ENCODE measurements at regions of chr12 and their contacts with region 1.

Region 1: GRCh38 chr12:95623585-95624042 is 72.3 kb upstream of the USP44 start:
- DNase-seq: peak; percentile 88
- H3K4me3 ChIP-seq: no peak overlapping the region
- H3K27ac ChIP-seq: peak overlapping the region; percentile 98
- H3K4me1 ChIP-seq: peaks cover 16% of the 10 kb centered on the region
- H3K27me3 ChIP-seq: no peaks in the 10 kb centered on the region
- CTCF ChIP-seq: peak; percentile 73 to 83
- POLR2A ChIP-seq: no peak

Region 2: GRCh38 chr12:95608252-95609033 is 15.2 kb before region 1 on chr12:
- CTCF ChIA-PET with region 1: interaction called, 8 read pairs
- POLR2A ChIA-PET with region 1: no interaction called
- dilution Hi-C with region 1: no loop called
- intact Hi-C with region 1: loop called (anchors 1 kb)
- DNase-seq: peak; percentile 91
- H3K4me3 ChIP-seq: no peak overlapping the region
- H3K27ac ChIP-seq: peak overlapping the region; percentile 91
- H3K4me1 ChIP-seq: peaks cover 74% of the 10 kb centered on the region
- H3K27me3 ChIP-seq: no peaks in the 10 kb centered on the region
- CTCF ChIP-seq: no peak
- POLR2A ChIP-seq: no peak

Region 3: DNA sequence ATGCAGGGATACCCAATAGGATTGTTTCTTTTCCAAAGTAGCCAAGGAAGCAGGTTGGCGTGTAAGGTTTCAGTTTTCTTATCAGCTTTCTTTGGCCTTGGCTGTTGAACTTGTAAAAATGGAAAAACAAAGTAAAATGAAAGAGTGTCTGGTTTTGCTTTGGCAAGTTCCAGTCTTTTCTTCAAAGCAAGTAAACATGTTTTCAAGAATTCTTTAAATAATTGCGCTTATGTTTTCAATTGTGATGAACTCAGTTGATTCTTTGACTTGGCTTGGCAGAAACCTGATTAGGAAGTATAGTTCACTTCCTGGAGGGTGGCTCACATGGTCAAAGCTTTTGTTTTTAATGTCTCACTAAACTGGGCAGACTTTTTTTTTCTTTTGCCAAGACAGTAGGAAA is 39.9 kb after region 1 on chr12:
- CTCF ChIA-PET with region 1: interaction called, 3 read pairs
- POLR2A ChIA-PET with region 1: no interaction called
- dilution Hi-C with region 1: no loop called
- intact Hi-C with region 1: loop called (anchors 1 kb)
- DNase-seq: peak; percentile 97
- H3K4me3 ChIP-seq: peak overlapping the region in 2 of 3 experiments; percentile 56 to 67
- H3K27ac ChIP-seq: peak overlapping the region; percentile 93
- H3K4me1 ChIP-seq: peaks cover 26% of the 10 kb centered on the region
- H3K27me3 ChIP-seq: no peaks in the 10 kb centered on the region
- CTCF ChIP-seq: no peak
- POLR2A ChIP-seq: peak; percentile 41

Region 4: GRCh38 chr12:95721350-95721749 is 97.7 kb after region 1 on chr12:
- CTCF ChIA-PET with region 1: interaction called, 6 read pairs
- POLR2A ChIA-PET with region 1: no interaction called
- dilution Hi-C with region 1: no loop called
- intact Hi-C with region 1: loop called (anchors 5 kb)
- DNase-seq: no peak
- H3K4me3 ChIP-seq: no peak overlapping the region
- H3K27ac ChIP-seq: no peak overlapping the region
- H3K4me1 ChIP-seq: peaks cover 13% of the 10 kb centered on the region
- H3K27me3 ChIP-seq: no peaks in the 10 kb centered on the region
- CTCF ChIP-seq: peak in 1 of 2 donors; percentile 9
- POLR2A ChIP-seq: no peak

Region 5: DNA sequence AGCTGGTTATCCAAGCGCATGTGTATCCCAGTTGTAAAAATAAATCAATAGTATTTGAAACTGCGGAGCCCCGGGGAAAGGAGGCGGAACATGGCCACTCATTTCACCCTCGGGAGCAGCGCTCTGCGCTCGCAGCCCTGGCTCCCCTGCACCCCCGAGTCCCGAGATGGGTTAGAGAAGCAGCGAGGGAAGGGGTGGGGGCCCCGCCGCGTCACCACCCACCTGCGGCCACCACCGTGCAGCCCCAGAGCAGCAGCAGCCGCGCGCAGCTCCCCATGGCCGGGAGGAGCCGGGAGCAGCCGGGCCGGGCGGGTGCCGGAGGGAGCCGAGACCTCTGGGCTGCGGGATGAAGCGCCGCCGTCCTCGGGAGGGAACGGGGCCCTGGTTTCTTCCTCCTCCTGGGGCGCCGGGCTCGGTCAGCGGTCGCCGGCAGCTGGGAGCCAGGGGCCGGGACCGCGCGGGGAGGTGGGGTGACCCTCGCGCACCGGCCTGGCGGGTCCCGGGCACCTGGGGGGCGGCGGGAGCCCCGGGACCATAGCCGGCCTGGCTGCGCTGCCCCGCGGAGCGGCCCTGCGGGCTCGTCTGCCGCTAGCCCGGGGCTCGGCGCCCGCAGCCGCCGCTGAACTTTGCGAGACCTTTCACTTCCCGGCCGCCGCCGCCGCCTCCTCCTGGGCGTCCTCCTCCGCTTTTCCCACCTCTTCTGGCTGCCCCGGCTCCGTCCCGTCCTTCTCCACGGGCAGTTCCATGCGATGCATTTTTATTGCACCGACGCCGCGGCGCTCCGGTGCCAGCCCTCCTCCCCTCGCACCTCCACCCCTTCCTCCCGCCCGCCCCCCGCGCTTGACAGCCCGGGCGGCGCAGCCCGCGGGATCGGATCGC is 166.7 kb after region 1 on chr12 and contains the start of gene NTN4:
- CTCF ChIA-PET with region 1: interaction called, 3 read pairs
- POLR2A ChIA-PET with region 1: no interaction called
- dilution Hi-C with region 1: no loop called
- intact Hi-C with region 1: loop called (anchors 1 kb)
- DNase-seq: peak; percentile 67
- H3K4me3 ChIP-seq: peak within 1 kb of the TSS; percentile 79 to 93 (median 89)
- H3K27ac ChIP-seq: peak within 1 kb of the TSS; percentile 83
- H3K4me1 ChIP-seq: peaks cover 38% of the 10 kb centered on the region
- H3K27me3 ChIP-seq: no peaks in the 10 kb centered on the region
- CTCF ChIP-seq: no peak
- POLR2A ChIP-seq: peak; percentile 66
- total RNA-seq, gene NTN4: 105 and 120 TPM in 2 replicates

Region 6: DNA sequence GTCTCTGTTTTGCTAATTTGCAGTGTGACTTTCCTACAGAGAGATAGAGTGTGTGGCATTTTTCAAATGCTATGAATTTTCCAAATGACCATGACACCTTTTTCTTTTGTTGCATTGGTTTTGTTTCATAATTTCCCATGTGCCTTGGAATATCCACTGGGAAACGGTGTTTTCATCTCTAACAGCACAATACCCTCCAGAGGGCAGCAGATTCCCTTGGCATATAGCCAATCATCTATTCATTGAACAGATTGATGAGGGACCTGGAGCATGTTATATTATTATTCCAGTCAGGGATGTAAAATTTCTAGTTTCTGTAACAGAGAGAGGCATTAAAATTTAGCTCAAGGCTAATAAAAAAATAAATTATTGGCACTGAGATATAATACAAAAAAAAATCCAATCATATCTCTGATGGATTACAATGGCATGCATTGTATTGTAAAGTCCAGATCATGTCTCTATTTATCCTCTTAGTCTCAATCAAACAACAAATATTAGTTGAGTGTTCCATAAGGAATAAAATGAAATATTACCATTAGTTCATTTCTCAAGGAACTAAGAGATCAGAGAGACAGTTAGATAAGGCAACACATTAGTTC is 196.6 kb after region 1 on chr12:
- CTCF ChIA-PET with region 1: interaction called, 5 read pairs
- POLR2A ChIA-PET with region 1: no interaction called
- dilution Hi-C with region 1: no loop called
- intact Hi-C with region 1: loop called (anchors 1 kb)
- DNase-seq: peak; percentile 75
- H3K4me3 ChIP-seq: no peak overlapping the region
- H3K27ac ChIP-seq: no peak overlapping the region
- H3K4me1 ChIP-seq: no peaks in the 10 kb centered on the region
- H3K27me3 ChIP-seq: no peaks in the 10 kb centered on the region
- CTCF ChIP-seq: peak; percentile 51 to 61
- POLR2A ChIP-seq: no peak

Measured in endothelial cell of umbilical vein (primary cell).